Sigmoid colon (tissue), 7 donors: ENCODE measurements at regions of chr3 and their contacts with region 1.

Region 1: DNA sequence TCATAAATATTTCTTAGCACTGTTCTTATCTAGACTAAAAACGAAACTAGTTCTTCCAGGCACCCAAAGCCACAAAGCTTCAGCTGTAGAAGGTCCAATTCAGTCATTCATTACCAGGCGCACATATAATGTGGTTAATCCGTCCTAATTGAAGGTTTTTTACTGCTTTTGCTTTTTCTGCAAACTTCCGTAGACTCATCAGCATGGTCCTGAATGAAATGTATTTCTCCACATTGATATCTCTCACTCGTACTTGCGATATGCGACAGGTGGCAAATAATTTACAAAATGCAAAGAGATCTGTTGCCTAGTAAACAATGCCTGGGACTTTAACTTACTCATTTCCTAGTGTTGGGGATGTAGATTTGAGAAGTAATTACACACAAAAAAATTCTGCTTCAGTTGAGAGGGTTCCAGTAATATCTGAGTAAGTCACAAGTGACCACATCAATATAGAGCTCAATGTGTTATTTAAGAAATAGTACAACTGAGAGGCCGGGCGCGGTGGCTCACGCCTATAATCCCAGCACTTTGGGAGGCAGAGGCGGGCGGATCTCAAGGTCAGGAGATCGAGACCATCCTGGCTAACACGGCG is 75.0 kb upstream of the MBNL1 start:
- DNase-seq: no peak
- H3K4me3 ChIP-seq: peak overlapping the region in 2 of 4 donors; percentile 5 to 19
- H3K27ac ChIP-seq: peak overlapping the region in 3 of 4 donors; percentile 46 to 89 (median 87)
- H3K4me1 ChIP-seq: peaks cover 0 to 34% (median 23%) of the 10 kb centered on the region in 4 donors
- H3K27me3 ChIP-seq: no peaks in the 10 kb centered on the region
- CTCF ChIP-seq: no peak
- EP300 ChIP-seq: no peak
- POLR2A ChIP-seq: no peak

Region 2: GRCh38 chr3:152097770-152098169 is 96.0 kb before region 1 on chr3:
- intact Hi-C with region 1: loop called (anchors 5 kb)
- DNase-seq: peak; percentile 58
- H3K4me3 ChIP-seq: no peak overlapping the region
- H3K27ac ChIP-seq: peak overlapping the region; percentile 53 to 87 (median 79)
- H3K4me1 ChIP-seq: peaks cover 0 to 38% (median 24%) of the 10 kb centered on the region in 4 donors
- H3K27me3 ChIP-seq: no peaks in the 10 kb centered on the region
- CTCF ChIP-seq: no peak
- EP300 ChIP-seq: no peak
- POLR2A ChIP-seq: no peak

Region 3: GRCh38 chr3:152127058-152127457 is 66.7 kb before region 1 on chr3:
- intact Hi-C with region 1: no loop called
- DNase-seq: no peak
- H3K4me3 ChIP-seq: no peak overlapping the region
- H3K27ac ChIP-seq: no peak overlapping the region
- H3K4me1 ChIP-seq: peaks cover 0 to 16% (median 0%) of the 10 kb centered on the region in 4 donors
- H3K27me3 ChIP-seq: no peaks in the 10 kb centered on the region
- CTCF ChIP-seq: no peak
- EP300 ChIP-seq: no peak
- POLR2A ChIP-seq: no peak

Region 4: GRCh38 chr3:152159328-152159727 is 34.4 kb before region 1 on chr3:
- intact Hi-C with region 1: loop called (anchors 5 kb)
- DNase-seq: no peak
- H3K4me3 ChIP-seq: no peak overlapping the region
- H3K27ac ChIP-seq: peak overlapping the region in 3 of 4 donors; percentile 54 to 79 (median 69)
- H3K4me1 ChIP-seq: peaks cover 0 to 60% (median 31%) of the 10 kb centered on the region in 4 donors
- H3K27me3 ChIP-seq: no peaks in the 10 kb centered on the region
- CTCF ChIP-seq: no peak
- EP300 ChIP-seq: peak in 1 of 4 donors; percentile 57
- POLR2A ChIP-seq: no peak

Region 5: DNA sequence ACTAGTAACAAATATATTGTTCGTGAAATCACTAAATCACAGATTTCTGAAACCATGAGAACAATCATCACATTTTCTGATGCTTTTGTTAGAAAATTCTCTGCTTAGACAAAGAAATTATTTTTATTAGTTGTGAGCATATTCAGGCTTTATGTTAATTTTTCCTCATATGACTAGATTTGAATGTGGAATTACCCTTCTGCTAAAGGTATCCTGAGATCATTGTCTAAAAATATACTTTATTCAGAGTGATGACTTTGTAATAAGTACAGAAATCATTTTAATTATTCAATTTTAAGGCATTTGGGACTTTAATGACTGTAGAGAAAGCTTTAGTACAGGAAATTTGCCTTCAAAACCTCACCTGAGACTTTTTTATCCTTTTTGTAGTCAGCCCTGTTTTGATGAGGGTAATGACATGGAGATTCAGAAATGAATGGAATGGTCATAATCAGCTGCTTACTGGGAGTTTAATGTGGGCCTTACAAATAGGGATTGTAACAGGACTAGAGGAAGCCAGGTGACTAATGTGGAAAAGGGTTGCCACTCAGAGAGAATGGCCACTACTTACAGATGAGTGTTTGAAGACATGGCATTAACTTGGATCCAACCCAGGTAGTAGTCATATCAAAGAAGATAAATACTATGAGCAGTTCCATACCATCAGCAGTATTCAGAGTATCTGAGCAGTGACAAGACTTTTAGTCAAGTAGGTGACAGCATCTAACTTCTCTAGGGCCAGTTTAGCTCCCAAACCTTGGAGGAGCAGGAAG is 223.2 kb after region 1 on chr3:
- intact Hi-C with region 1: no loop called
- DNase-seq: no peak
- H3K4me3 ChIP-seq: no peak overlapping the region
- H3K27ac ChIP-seq: peak overlapping the region in 3 of 4 donors; percentile 18 to 24 (median 19)
- H3K4me1 ChIP-seq: peaks cover 0 to 45% (median 27%) of the 10 kb centered on the region in 4 donors
- H3K27me3 ChIP-seq: no peaks in the 10 kb centered on the region
- CTCF ChIP-seq: no peak
- EP300 ChIP-seq: no peak
- POLR2A ChIP-seq: no peak

Region 6: DNA sequence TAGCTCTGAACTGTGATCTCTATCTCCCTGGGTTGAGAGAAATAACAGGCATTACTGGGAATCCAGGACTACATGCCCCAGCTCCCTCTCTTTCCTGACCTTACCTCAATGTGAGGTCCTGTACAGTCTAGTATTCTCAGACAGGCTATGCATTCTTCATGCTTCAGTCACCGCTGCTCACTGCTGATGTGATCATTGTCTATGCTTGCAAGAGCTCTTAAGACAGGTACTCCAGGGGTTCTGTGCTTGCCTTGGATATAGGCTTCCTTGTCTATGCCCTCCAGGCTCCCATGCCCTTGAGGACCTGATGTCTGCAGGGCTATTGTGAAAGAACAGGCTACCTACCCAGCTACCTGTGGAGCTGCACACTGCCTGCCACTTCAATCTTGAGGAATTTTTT is 258.5 kb after region 1 on chr3:
- intact Hi-C with region 1: loop called (anchors 10 kb)
- DNase-seq: no peak
- H3K4me3 ChIP-seq: no peak overlapping the region
- H3K27ac ChIP-seq: no peak overlapping the region
- H3K4me1 ChIP-seq: peaks cover 0 to 82% (median 51%) of the 10 kb centered on the region in 4 donors
- H3K27me3 ChIP-seq: no peaks in the 10 kb centered on the region
- CTCF ChIP-seq: no peak
- EP300 ChIP-seq: no peak
- POLR2A ChIP-seq: no peak

Region 7: DNA sequence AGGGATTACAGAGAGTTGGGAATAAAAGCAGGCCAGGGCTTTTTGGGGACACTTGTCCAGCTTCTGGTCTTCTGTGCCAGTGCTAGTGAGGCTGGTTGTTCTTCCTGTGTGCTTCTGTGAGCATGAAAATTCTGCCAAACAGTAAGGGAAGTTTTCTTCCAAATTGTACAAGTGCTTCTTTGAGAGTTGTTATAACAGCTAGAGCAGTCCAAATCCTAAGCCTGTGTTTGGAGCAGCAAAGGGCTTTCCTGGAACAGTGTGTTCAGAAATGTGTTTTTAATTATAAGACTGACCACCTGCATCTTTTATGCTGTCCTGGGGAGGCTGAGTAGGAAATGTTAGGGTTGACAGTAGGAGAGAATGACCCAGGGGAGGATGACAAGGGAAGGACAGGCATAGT is 418.1 kb after region 1 on chr3:
- intact Hi-C with region 1: no loop called
- DNase-seq: no peak
- H3K4me3 ChIP-seq: no peak overlapping the region
- H3K27ac ChIP-seq: peak overlapping the region in 2 of 4 donors; percentile 16 to 35
- H3K4me1 ChIP-seq: peaks cover 0 to 4% (median 0%) of the 10 kb centered on the region in 4 donors
- H3K27me3 ChIP-seq: no peaks in the 10 kb centered on the region
- CTCF ChIP-seq: no peak
- EP300 ChIP-seq: no peak
- POLR2A ChIP-seq: no peak